Endothelial cell of umbilical vein (primary cell): ENCODE measurements at regions of chr11 and their contacts with region 1.

Region 1: DNA sequence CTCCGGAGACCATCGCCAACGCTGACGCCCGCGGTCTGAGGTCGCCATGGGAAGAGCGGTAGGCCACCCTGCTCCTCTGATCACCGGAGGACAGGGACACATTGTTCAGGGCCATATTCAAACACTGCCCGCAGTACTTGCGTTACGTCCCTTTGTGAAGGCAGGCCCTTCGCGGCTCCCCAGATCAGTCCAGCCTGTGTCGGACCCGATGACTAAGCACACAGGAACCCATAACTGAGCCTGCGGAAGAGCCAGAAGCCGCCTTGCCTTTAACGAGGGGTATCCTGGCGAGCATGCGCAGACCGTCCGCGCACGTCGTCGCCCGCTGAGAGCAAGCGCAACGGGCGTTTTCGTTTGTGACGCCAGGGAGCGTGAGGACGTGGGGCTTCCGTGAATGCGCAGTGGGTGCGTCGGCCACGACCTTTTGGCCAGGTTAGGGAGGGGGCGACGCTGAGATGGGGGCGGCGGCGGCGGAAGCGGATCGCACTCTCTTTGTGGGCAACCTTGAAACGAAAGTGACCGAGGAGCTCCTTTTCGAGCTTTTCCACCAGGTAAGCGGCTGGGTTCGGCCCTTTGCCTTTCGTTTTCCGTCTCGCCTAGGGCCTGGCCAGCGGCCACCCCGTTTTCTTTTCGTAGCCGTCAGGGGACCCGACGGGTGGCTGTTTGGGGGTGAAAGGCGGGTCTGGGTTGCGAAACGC is at the starts of genes C11orf71 and RBM7:
- DNase-seq: peak; percentile 99
- H3K4me3 ChIP-seq: peak within 1 kb of the TSS; percentile 66 to 84 (median 79)
- H3K27ac ChIP-seq: peak within 1 kb of the TSS; percentile 86
- H3K4me1 ChIP-seq: peaks cover 27% of the 10 kb centered on the region
- H3K27me3 ChIP-seq: no peaks in the 10 kb centered on the region
- CTCF ChIP-seq: no peak
- POLR2A ChIP-seq: peak; percentile 98
- total RNA-seq, gene C11orf71: 4.0 and 5.4 TPM in 2 replicates
- total RNA-seq, gene RBM7: 31.3 and 38.4 TPM in 2 replicates

Region 2: DNA sequence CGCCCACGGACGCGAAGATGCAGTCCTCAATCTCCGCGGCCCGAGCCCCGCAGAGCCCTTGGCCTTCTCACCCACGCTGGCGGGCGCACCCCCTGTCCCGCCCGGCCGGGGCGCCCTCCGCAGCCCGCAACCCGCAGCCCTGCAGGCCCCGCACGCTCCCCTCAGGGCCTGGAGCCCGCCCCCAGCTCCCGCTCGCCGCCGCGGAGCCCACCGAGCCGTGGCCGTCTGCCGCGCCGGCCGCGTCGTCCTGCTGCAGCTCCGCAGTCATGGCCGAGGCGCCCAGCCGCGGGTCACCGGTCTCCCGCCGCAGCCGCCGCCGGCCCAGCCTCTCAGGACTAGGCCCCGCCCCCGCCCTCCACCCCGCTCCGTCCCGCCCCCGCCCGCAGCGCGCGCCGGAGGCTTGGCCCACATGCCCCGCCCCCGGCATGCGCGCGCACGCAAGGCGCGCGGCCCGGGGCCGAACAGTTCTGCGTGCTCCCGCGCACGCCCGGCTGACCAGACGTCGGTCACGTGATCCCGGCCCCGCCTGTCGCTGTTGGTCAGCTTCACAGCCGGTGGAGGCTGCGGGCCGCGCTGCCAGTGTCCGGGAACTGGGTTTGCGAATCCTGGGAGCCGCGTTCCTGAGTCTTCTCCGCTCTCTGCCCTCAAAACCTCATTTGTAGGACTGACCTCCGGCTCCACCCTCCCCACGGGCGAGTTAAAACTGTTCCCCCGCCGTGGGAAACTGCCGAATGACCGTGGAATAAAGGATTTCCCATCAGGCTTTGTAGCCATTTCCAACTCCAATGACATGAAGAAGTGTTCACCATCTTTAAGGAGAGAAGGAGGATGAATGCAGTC is 524.9 kb before region 1 on chr11 and contains the start of gene USP28:
- CTCF ChIA-PET with region 1: no interaction called
- POLR2A ChIA-PET with region 1: no interaction called
- dilution Hi-C with region 1: no loop called
- intact Hi-C with region 1: loop called (anchors 5 kb)
- DNase-seq: peak; percentile 95
- H3K4me3 ChIP-seq: peak within 1 kb of the TSS; percentile 47 to 94 (median 94)
- H3K27ac ChIP-seq: peak within 1 kb of the TSS; percentile 92
- H3K4me1 ChIP-seq: peaks cover 24% of the 10 kb centered on the region
- H3K27me3 ChIP-seq: no peaks in the 10 kb centered on the region
- CTCF ChIP-seq: no peak
- POLR2A ChIP-seq: peak; percentile 97
- total RNA-seq, gene USP28: 29.6 and 30.5 TPM in 2 replicates

Region 3: GRCh38 chr11:114154271-114155047 is 245.9 kb before region 1 on chr11:
- CTCF ChIA-PET with region 1: no interaction called
- POLR2A ChIA-PET with region 1: no interaction called
- dilution Hi-C with region 1: no loop called
- intact Hi-C with region 1: no loop called
- DNase-seq: no peak
- H3K4me3 ChIP-seq: no peak overlapping the region
- H3K27ac ChIP-seq: no peak overlapping the region
- H3K4me1 ChIP-seq: peaks cover 8% of the 10 kb centered on the region
- H3K27me3 ChIP-seq: no peaks in the 10 kb centered on the region
- CTCF ChIP-seq: no peak
- POLR2A ChIP-seq: no peak

Region 4: GRCh38 chr11:114348200-114349191 is 51.9 kb before region 1 on chr11:
- CTCF ChIA-PET with region 1: interaction called, 22 read pairs
- POLR2A ChIA-PET with region 1: no interaction called
- dilution Hi-C with region 1: no loop called
- intact Hi-C with region 1: loop called (anchors 2 kb)
- DNase-seq: peak; percentile 75
- H3K4me3 ChIP-seq: no peak overlapping the region
- H3K27ac ChIP-seq: no peak overlapping the region
- H3K4me1 ChIP-seq: no peaks in the 10 kb centered on the region
- H3K27me3 ChIP-seq: no peaks in the 10 kb centered on the region
- CTCF ChIP-seq: peak; percentile 35 to 39
- POLR2A ChIP-seq: no peak

Region 5: DNA sequence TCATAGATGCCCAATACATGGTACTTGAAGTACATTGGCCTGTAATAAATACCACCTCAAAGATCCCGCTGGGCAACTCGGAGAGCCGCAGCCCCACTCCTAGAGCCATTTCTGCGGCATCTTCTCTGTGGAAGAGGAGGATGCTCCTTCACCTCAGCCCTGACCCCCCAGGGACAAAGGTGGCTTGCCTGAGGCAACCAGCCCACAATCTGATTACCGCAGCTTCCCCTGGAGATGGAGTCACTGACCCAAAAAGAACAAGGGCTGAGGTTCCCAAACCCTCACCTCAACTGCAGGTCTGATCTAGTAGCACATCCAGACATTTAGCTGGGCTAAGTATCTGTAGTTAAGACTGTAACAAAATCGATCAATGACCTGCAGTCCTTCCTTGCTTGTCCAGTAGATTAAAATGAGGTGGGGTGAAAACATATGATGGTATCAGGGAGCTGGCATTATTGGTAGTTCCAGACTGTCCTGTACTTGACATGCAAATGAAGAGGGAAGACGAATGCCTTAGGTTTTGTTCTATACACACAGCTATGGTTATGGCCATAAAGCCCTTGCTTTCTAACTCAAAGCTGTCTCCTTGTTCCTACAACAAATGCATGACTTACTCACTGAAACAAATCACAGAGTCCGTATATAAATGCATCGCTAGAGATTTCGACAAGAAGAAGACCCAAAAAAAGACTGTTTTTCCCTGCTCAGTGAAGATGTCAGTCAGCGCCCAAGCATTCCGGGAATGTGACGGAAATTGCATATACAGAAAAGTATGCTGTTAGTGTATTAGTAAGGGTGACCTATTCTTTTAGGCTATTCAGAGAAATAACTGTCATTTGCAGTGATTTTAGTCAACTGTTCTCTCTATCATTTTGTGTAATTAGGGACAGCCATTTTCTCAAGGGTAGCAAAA is 33.8 kb before region 1 on chr11:
- CTCF ChIA-PET with region 1: interaction called, 3 read pairs
- POLR2A ChIA-PET with region 1: interaction called, 5 read pairs
- dilution Hi-C with region 1: no loop called
- intact Hi-C with region 1: loop called (anchors 1 kb)
- DNase-seq: peak; percentile 51
- H3K4me3 ChIP-seq: no peak overlapping the region
- H3K27ac ChIP-seq: peak overlapping the region; percentile 35
- H3K4me1 ChIP-seq: peaks cover 5% of the 10 kb centered on the region
- H3K27me3 ChIP-seq: no peaks in the 10 kb centered on the region
- CTCF ChIP-seq: no peak
- POLR2A ChIP-seq: no peak

Region 6: DNA sequence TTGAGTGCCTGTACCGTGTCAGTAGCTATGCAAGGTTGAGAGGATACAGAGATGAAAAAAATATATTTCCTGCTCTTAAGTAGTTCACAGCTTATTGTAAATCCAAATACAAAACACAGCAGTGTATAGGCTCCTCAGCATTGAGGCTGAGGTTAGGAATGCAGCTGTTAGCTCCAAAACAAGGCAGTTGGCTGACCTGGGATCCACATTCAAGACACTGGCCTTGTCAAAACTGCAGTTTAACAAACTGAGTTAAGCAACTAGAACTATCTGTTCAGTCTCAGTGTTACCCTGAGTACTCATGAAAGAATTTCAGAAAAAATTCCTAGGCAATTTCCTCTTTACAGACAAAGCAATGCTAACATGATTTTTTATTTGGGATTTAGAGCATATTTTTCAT is 81.7 kb after region 1 on chr11:
- CTCF ChIA-PET with region 1: no interaction called
- POLR2A ChIA-PET with region 1: no interaction called
- dilution Hi-C with region 1: no loop called
- intact Hi-C with region 1: no loop called
- DNase-seq: no peak
- H3K4me3 ChIP-seq: no peak overlapping the region
- H3K27ac ChIP-seq: no peak overlapping the region
- H3K4me1 ChIP-seq: no peaks in the 10 kb centered on the region
- H3K27me3 ChIP-seq: no peaks in the 10 kb centered on the region
- CTCF ChIP-seq: no peak
- POLR2A ChIP-seq: no peak

Region 7: GRCh38 chr11:114762408-114762807 is 362.0 kb after region 1 on chr11:
- CTCF ChIA-PET with region 1: no interaction called
- POLR2A ChIA-PET with region 1: no interaction called
- dilution Hi-C with region 1: no loop called
- intact Hi-C with region 1: loop called (anchors 5 kb)
- DNase-seq: peak; percentile 47
- H3K4me3 ChIP-seq: no peak overlapping the region
- H3K27ac ChIP-seq: no peak overlapping the region
- H3K4me1 ChIP-seq: no peaks in the 10 kb centered on the region
- H3K27me3 ChIP-seq: no peaks in the 10 kb centered on the region
- CTCF ChIP-seq: peak; percentile 51 to 75
- POLR2A ChIP-seq: no peak